Esophagus muscularis mucosa (tissue), 4 donors: ENCODE measurements at regions of chr4 and their contacts with region 1.

Region 1: GRCh38 chr4:99417125-99417524 is 18.0 kb downstream of the ADH7 start:
- DNase-seq: no peak
- H3K4me3 ChIP-seq: no peak overlapping the region
- H3K27ac ChIP-seq: no peak overlapping the region
- H3K4me1 ChIP-seq: peaks cover 0 to 13% (median 6%) of the 10 kb centered on the region in 4 donors
- H3K27me3 ChIP-seq: no peaks in the 10 kb centered on the region
- CTCF ChIP-seq: no peak
- EP300 ChIP-seq: no peak
- POLR2A ChIP-seq: no peak

Region 2: GRCh38 chr4:99457270-99457669 is 40.1 kb after region 1 on chr4:
- intact Hi-C with region 1: loop called (anchors 5 kb)
- DNase-seq: no peak
- H3K4me3 ChIP-seq: no peak overlapping the region
- H3K27ac ChIP-seq: no peak overlapping the region
- H3K4me1 ChIP-seq: peaks cover 0 to under 1% (median 0%) of the 10 kb centered on the region in 4 donors
- H3K27me3 ChIP-seq: no peaks in the 10 kb centered on the region
- CTCF ChIP-seq: no peak
- EP300 ChIP-seq: no peak
- POLR2A ChIP-seq: no peak

Region 3: DNA sequence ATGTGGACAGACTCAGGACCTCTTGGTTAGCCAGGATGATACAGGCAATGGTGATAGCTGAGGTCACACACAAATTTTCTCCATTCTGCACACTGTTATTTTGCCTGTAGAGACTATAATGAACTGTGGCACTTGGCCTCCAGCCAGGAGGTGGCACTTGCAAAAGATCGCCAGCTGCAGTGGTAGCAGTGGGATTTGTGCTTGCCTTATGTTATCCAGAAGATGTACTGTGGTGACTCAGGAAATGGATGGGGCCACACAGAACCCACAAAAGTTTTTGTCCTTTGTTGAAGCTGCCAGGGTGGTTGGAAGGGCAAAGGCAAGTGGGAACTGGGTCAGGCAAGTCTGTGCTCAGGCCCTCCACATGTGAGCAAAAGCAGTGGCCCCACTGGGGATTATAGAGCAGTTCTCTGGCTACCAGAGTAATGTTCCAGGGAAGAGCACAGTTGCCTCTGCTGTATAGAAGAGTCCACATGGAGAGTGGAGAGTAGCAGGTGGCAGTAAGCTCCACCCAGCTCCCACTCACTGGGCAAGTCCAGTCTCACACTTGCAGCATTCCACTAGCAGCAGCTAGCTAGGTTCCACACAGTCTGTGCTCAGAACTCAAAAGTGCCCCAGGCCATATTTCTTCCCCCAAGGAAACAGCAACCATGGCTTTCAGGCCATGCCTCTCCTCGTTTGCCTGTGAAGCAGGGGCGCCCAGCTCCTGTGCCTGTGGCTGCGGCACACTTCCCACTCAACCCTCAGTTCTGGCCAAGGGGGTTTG is 87.9 kb after region 1 on chr4:
- intact Hi-C with region 1: no loop called
- DNase-seq: no peak
- H3K4me3 ChIP-seq: no peak overlapping the region
- H3K27ac ChIP-seq: no peak overlapping the region
- H3K4me1 ChIP-seq: no peaks in the 10 kb centered on the region
- H3K27me3 ChIP-seq: no peaks in the 10 kb centered on the region
- CTCF ChIP-seq: no peak
- EP300 ChIP-seq: no peak
- POLR2A ChIP-seq: no peak